ENCODE measurements at regions of chr7 and their contacts with region 1.

Region 1: DNA sequence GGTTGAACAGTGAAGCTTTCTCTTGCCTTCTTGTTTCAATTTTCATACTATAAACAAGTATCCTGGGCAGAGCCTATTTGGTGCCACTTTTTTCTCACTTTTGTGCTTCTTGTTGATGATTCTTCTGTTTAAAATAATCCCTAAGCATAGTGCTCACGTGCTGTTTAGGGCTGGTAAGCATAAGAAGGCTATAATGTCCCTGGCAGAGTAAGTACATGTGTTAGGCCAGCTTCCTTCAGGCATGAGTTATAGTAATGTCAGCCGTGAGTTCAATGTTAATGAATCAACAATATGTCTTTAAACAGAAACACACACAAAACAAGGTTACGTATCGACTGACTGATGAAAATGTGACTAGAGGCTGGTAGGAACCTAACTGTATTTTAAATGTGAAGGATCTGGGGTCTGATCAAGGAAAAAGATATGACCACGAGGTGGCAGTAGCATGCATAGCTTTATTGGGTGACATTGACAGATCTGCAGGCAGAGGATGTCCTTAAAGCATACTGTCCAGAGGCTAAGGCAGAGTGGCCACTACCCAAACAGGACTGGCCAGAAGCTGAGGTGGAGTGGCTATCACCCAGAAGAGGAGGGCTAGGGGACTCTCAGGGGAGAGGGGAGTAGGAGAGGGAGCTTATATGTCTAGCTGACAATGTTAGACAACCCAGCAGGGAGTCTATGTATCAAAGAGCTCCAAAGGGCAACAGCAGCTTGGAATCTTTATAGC is 113.7 kb downstream of the BRAF start:
- DNase-seq: peak; percentile 76
- ATAC-seq: peak; percentile 77
- H3K4me3 Mint-ChIP-seq: no peak overlapping the region
- H3K27ac Mint-ChIP-seq: no peak overlapping the region
- H3K4me1 Mint-ChIP-seq: peaks cover 5% of the 10 kb centered on the region
- H3K27me3 Mint-ChIP-seq: no peaks in the 10 kb centered on the region
- CTCF ChIP-seq: peak; percentile 77

Region 2: DNA sequence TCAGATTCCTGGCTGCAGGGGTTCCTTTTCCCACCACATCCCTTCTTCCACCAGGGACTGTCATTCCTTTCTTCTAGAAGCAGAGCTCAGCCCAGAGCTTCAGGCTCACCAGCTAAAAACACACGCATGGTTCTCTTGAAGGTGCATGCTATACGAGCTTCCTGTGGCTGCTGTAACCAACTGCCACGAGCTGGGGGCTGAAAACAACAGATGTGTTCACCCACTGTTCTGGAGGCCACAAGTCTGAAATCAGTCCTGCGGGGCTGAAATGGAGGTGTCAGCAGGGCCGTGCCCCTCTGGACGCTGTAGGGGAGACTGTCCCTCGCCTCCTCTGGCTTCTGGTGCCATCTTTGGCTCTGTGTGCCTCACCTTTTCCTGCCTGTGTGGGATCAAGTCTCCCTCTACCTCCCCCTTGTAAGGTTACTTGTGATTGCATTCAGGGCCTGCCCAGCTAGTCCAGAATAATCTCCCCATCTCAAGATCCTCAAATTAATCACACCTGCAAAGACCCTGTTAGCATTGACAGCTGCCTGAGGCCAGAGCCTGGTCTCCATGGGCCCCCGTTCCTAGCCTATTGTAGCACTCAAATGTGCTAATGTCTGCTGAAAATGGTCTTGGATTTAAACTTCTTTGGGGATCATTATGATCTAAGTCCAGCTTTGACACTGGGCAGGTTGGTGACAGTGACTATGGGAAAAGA is 393.4 kb before region 1 on chr7:
- CTCF ChIA-PET with region 1: no interaction called
- POLR2A ChIA-PET with region 1: no interaction called
- intact Hi-C with region 1: no loop called
- DNase-seq: peak; percentile 19
- ATAC-seq: peak; percentile 62
- H3K4me3 Mint-ChIP-seq: no peak overlapping the region
- H3K27ac Mint-ChIP-seq: peak overlapping the region; percentile 39
- H3K4me1 Mint-ChIP-seq: peaks cover 10% of the 10 kb centered on the region
- H3K27me3 Mint-ChIP-seq: no peaks in the 10 kb centered on the region
- CTCF ChIP-seq: no peak

Region 3: GRCh38 chr7:140752533-140752932 is 58.5 kb before region 1 on chr7:
- CTCF ChIA-PET with region 1: no interaction called
- POLR2A ChIA-PET with region 1: no interaction called
- intact Hi-C with region 1: no loop called
- DNase-seq: no peak
- ATAC-seq: no peak
- H3K4me3 Mint-ChIP-seq: no peak overlapping the region
- H3K27ac Mint-ChIP-seq: no peak overlapping the region
- H3K4me1 Mint-ChIP-seq: no peaks in the 10 kb centered on the region
- H3K27me3 Mint-ChIP-seq: no peaks in the 10 kb centered on the region
- CTCF ChIP-seq: no peak

Region 4: DNA sequence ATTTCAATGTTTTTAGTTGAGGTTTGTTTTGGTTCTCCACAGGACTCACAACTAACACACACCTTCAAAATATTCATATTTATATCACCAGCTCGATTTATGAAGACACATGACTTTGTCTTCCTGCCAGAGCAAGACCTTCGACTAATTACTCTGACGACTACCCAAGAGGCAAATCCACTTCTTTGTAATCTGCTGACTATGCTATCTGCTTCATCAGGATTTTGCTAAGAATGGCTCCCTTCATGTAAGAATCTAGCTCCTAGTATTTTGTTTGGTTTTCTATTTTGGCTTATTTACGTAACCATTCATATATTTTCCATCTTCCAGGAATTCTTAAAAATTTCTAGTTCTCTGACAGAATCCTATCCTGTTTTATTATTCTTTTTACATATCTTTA is 20.7 kb after region 1 on chr7:
- CTCF ChIA-PET with region 1: interaction called, 14 read pairs
- POLR2A ChIA-PET with region 1: no interaction called
- intact Hi-C with region 1: no loop called
- DNase-seq: no peak
- ATAC-seq: no peak
- H3K4me3 Mint-ChIP-seq: no peak overlapping the region
- H3K27ac Mint-ChIP-seq: no peak overlapping the region
- H3K4me1 Mint-ChIP-seq: peaks cover 3% of the 10 kb centered on the region
- H3K27me3 Mint-ChIP-seq: no peaks in the 10 kb centered on the region
- CTCF ChIP-seq: no peak

Region 5: DNA sequence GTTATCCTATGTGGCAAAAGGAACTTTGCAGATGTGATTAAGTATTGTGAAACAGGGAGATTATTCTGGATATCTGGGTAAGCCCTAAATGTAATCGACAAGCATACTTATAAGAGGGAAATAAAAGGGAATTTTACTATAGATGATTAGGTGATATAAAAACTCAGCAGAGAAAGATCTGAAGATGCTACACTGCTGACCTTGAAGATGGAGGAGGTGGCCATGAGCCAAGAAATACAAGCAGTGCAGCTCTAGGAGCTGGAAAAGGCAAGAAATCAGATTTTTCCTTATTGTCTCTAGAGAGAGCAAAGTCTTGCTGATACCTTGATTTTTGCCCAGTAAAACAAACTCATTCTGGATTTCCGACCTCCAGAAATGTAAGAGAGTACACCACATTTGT is 46.1 kb after region 1 on chr7:
- CTCF ChIA-PET with region 1: interaction called, 10 read pairs
- POLR2A ChIA-PET with region 1: no interaction called
- intact Hi-C with region 1: no loop called
- DNase-seq: no peak
- ATAC-seq: no peak
- H3K4me3 Mint-ChIP-seq: no peak overlapping the region
- H3K27ac Mint-ChIP-seq: no peak overlapping the region
- H3K4me1 Mint-ChIP-seq: peaks cover 35% of the 10 kb centered on the region
- H3K27me3 Mint-ChIP-seq: no peaks in the 10 kb centered on the region
- CTCF ChIP-seq: no peak

Region 6: GRCh38 chr7:140924019-140924820 is 113.2 kb after region 1 on chr7:
- CTCF ChIA-PET with region 1: interaction called, 7 read pairs
- POLR2A ChIA-PET with region 1: no interaction called
- intact Hi-C with region 1: loop called (anchors 5 kb)
- DNase-seq: peak; percentile 82
- ATAC-seq: peak; percentile 75
- H3K4me3 Mint-ChIP-seq: no peak overlapping the region
- H3K27ac Mint-ChIP-seq: no peak overlapping the region
- H3K4me1 Mint-ChIP-seq: peaks cover 16% of the 10 kb centered on the region
- H3K27me3 Mint-ChIP-seq: no peaks in the 10 kb centered on the region
- CTCF ChIP-seq: no peak

Region 7: DNA sequence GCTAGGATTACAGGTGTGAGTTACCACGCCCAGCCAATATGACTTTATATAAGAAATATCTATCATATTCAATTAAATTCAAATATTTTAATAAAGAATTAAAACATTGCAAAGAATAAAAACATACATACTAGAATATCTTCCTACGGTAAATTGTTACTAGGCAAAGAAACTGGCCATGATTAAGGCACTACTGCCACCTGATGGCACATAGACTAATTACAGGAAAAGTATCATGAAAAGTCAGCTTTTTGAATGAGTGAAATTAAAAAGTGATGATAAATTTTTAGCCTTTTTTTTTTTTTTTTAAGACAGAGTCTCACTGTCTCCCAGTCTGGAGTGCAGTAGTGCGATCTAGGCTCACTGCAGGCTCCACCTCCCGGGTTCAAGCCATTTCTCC is 172.8 kb after region 1 on chr7:
- CTCF ChIA-PET with region 1: interaction called, 82 read pairs
- POLR2A ChIA-PET with region 1: no interaction called
- intact Hi-C with region 1: loop called (anchors 2 kb)
- DNase-seq: peak; percentile 20
- ATAC-seq: no peak
- H3K4me3 Mint-ChIP-seq: no peak overlapping the region
- H3K27ac Mint-ChIP-seq: no peak overlapping the region
- H3K4me1 Mint-ChIP-seq: no peaks in the 10 kb centered on the region
- H3K27me3 Mint-ChIP-seq: no peaks in the 10 kb centered on the region
- CTCF ChIP-seq: peak; percentile 79

Region 8: GRCh38 chr7:141003172-141004065 is 192.4 kb after region 1 on chr7:
- CTCF ChIA-PET with region 1: interaction called, 15 read pairs
- POLR2A ChIA-PET with region 1: no interaction called
- intact Hi-C with region 1: no loop called
- DNase-seq: no peak
- ATAC-seq: no peak
- H3K4me3 Mint-ChIP-seq: no peak overlapping the region
- H3K27ac Mint-ChIP-seq: no peak overlapping the region
- H3K4me1 Mint-ChIP-seq: peaks cover 14% of the 10 kb centered on the region
- H3K27me3 Mint-ChIP-seq: no peaks in the 10 kb centered on the region
- CTCF ChIP-seq: no peak

Region 9: DNA sequence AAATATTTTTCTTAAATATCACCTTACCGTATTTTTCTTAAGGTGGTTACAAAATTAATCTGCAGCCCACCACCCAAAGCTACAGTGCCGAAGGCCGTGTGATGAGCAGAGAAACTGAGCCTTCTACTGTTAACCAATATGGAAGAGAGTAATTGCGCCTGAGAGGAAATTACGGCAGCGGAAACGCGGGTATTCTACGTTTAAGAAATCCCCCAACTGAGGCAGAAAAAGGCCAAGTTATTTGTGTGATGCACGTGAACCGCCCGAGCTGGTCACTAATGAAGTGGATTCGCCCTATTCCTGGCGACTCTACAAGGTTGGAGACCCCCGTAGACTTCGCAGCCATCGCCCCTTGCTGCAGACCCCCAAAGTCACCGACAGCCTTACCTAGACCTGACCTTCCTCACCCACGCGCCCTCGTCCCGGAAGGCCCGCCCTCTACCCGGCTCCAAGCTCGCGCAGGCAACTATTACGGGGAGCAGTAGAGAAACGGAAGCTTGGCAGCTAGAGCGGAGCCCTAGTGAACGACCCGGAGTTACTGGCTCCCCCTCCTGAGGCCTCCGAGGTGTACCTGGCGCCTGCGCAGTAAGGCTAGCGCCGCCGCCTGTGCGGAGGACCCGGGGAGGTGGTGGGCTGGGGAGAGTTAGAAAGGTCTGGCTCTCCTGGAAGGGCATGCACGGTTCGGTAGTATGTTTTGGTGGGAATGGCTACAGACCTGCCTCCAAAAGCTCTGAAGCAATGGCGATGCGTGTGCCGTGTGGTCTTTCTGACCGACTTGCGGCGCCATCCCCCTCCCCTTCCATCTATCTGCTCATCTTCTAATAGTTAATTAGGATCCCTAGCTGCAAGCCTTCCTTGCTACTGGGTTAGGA is 203.8 kb after region 1 on chr7 and contains the start of gene MRPS33:
- CTCF ChIA-PET with region 1: interaction called, 69 read pairs
- POLR2A ChIA-PET with region 1: interaction called, 3 read pairs
- intact Hi-C with region 1: loop called (anchors 2 kb)
- DNase-seq: peak; percentile 98
- ATAC-seq: peak; percentile 98
- H3K4me3 Mint-ChIP-seq: peak within 1 kb of the TSS; percentile 97
- H3K27ac Mint-ChIP-seq: peak within 1 kb of the TSS; percentile 100
- H3K4me1 Mint-ChIP-seq: peaks cover 36% of the 10 kb centered on the region
- H3K27me3 Mint-ChIP-seq: peaks cover 7% of the 10 kb centered on the region
- CTCF ChIP-seq: no peak
- total RNA-seq, gene MRPS33: 95.5 to 101 TPM